Activated CD4-positive, alpha-beta T cell treated with anti-CD3 and anti-CD28 coated beads for 36 hours (primary cell): ENCODE measurements at regions of chr2 and their contacts with region 1.

Region 1: DNA sequence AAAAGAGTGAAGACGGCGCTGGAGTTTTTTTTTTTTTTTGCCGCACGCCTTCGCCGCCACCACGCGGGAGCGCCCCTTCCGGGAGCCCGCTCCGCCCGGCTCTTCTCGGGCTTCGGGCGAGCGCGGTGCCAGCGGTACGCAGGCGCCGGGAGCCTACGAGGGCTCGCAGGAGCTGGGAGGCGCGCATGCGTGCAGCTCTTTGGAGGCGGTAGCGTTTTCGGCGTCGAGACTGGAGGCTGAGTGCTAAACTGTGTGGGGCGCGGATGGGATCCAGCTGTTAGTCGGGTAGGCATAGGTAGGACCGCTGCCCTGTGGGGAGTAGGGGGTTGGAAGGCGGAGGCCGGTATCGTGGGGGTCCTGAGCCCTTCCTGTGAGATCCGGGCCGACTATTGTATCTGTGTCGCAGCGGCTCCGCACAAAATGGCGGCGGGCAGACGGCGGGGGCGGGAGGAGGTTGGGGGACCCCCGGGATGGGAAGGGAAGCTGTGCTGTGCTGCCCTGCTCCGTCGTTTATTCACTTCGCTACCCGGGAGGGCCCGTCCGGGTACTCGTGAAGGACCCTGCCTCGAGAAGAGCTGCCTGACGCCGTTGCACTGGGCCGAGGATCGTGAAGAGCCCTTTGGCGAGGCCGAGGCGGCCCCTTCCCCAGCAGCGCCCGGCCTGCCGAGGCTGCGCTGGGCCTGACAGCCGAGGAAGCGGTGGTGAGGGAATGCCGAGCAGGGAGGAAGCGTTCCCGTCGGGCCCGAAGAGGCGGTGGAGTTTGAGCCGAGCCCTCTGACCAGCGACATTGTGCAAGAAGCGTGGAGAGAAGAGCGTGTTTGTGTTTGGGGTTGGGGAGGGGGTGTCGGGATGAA is at the start of gene ZNF638:
- DNase-seq: peak; percentile 96
- ATAC-seq: peak; percentile 99
- H3K4me3 Mint-ChIP-seq: peak within 1 kb of the TSS; percentile 98
- H3K27ac Mint-ChIP-seq: peak within 1 kb of the TSS; percentile 100
- H3K4me1 Mint-ChIP-seq: peaks cover 31% of the 10 kb centered on the region
- H3K27me3 Mint-ChIP-seq: peaks cover 5% of the 10 kb centered on the region
- total RNA-seq, gene ZNF638: 79.8 to 97.5 TPM

Region 2: GRCh38 chr2:71068218-71069035 is 263.4 kb before region 1 on chr2 and contains the start of gene NAGK:
- CTCF ChIA-PET with region 1: no interaction called
- POLR2A ChIA-PET with region 1: interaction called, 3 read pairs
- intact Hi-C with region 1: loop called in 1 of 2 experiments (anchors 1 kb)
- DNase-seq: peak; percentile 98
- ATAC-seq: peak; percentile 81
- H3K4me3 Mint-ChIP-seq: peak within 1 kb of the TSS; percentile 98
- H3K27ac Mint-ChIP-seq: peak within 1 kb of the TSS; percentile 97
- H3K4me1 Mint-ChIP-seq: peaks cover 53% of the 10 kb centered on the region
- H3K27me3 Mint-ChIP-seq: no peaks in the 10 kb centered on the region
- total RNA-seq, gene NAGK: 39.7 to 40.6 TPM

Region 3: DNA sequence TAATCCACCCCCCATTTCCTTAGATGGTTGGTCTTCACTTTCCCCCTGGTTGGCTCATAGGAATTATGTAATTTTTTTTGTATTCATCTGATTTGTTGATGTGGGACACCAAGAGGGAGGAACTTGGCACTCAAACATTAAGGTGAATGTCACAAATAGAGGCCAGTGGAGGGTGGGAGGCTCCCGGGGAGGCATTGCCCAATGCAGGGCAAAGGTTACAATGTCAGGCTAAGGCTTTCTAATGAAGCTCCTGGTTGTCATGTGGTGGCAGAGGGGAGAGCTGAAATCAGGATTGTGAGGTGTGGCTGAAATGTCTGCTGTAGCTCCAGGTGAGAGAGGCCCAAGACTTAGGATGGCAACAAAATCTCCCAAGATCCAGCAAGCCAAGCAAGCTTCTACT is 158.7 kb before region 1 on chr2:
- CTCF ChIA-PET with region 1: no interaction called
- POLR2A ChIA-PET with region 1: no interaction called
- intact Hi-C with region 1: no loop called
- DNase-seq: no peak
- ATAC-seq: no peak
- H3K4me3 Mint-ChIP-seq: no peak overlapping the region
- H3K27ac Mint-ChIP-seq: no peak overlapping the region
- H3K4me1 Mint-ChIP-seq: peaks cover 8% of the 10 kb centered on the region
- H3K27me3 Mint-ChIP-seq: no peaks in the 10 kb centered on the region

Region 4: DNA sequence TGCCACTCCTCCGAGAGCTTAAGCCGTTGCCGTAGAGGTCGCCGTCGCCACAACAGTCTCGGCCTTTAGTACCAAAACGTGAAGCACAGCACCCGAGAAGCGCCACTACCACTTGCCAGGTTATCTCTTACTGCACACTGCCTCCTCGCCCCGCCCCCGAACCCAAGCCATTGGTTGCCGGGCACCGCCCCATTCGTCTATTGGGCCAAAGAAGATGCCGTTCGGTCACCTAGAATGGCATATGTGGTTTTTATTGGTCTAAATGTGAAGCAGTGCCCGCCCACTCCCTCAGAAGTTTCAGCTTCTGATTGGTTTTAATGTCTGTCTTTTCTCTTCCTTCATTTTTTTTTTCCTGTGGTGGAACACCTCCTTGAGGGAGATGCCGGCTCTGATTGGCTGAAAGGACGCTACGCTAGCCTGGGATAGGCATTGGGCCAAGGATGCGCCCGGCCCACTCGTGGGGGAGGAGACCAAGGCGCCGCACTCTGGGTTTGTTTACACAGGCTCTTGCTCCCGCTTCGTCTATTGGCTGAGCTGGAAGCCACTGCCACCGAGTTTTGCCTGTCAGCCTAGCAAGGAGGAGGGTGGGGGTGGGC is 104.7 kb before region 1 on chr2 and contains the start of gene PAIP2B:
- CTCF ChIA-PET with region 1: interaction called, 3 read pairs
- POLR2A ChIA-PET with region 1: interaction called, 3 read pairs
- intact Hi-C with region 1: loop called in 1 of 2 experiments (anchors 1 kb)
- DNase-seq: peak; percentile 99
- ATAC-seq: peak; percentile 97
- H3K4me3 Mint-ChIP-seq: peak within 1 kb of the TSS; percentile 94
- H3K27ac Mint-ChIP-seq: peak within 1 kb of the TSS; percentile 85
- H3K4me1 Mint-ChIP-seq: peaks cover 15% of the 10 kb centered on the region
- H3K27me3 Mint-ChIP-seq: peaks cover 5% of the 10 kb centered on the region
- total RNA-seq, gene PAIP2B: 2.3 to 3.0 TPM

Region 5: DNA sequence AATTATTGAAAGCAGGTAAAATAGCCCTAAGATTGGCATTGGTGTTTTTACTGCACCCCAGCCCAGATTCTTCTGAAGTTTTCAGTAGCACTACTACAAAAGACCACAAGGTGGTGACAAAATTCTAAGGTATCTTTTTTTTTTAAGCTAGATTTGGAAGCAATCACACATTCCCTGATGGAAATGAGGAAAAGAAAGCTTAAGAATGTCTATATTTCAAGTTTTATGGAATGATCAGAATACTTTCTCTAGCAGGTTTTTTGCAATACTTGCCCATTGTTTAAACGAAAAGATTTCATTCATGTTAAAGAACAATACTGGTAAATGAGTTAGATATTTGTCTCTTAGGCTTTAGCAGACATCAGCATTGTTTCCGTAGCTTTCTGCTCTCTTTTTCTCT is 32.3 kb before region 1 on chr2:
- CTCF ChIA-PET with region 1: interaction called, 10 read pairs
- POLR2A ChIA-PET with region 1: no interaction called
- intact Hi-C with region 1: loop called in 1 of 2 experiments (anchors 1 kb)
- DNase-seq: no peak
- ATAC-seq: no peak
- H3K4me3 Mint-ChIP-seq: no peak overlapping the region
- H3K27ac Mint-ChIP-seq: no peak overlapping the region
- H3K4me1 Mint-ChIP-seq: no peaks in the 10 kb centered on the region
- H3K27me3 Mint-ChIP-seq: no peaks in the 10 kb centered on the region

Region 6: GRCh38 chr2:71353248-71353647 is 21.4 kb after region 1 on chr2:
- CTCF ChIA-PET with region 1: interaction called, 7 read pairs
- POLR2A ChIA-PET with region 1: interaction called, 4 read pairs
- intact Hi-C with region 1: loop called (anchors 2 kb)
- DNase-seq: peak; percentile 10
- ATAC-seq: peak; percentile 98
- H3K4me3 Mint-ChIP-seq: no peak overlapping the region
- H3K27ac Mint-ChIP-seq: peak overlapping the region; percentile 67
- H3K4me1 Mint-ChIP-seq: peaks cover 59% of the 10 kb centered on the region
- H3K27me3 Mint-ChIP-seq: no peaks in the 10 kb centered on the region

Region 7: DNA sequence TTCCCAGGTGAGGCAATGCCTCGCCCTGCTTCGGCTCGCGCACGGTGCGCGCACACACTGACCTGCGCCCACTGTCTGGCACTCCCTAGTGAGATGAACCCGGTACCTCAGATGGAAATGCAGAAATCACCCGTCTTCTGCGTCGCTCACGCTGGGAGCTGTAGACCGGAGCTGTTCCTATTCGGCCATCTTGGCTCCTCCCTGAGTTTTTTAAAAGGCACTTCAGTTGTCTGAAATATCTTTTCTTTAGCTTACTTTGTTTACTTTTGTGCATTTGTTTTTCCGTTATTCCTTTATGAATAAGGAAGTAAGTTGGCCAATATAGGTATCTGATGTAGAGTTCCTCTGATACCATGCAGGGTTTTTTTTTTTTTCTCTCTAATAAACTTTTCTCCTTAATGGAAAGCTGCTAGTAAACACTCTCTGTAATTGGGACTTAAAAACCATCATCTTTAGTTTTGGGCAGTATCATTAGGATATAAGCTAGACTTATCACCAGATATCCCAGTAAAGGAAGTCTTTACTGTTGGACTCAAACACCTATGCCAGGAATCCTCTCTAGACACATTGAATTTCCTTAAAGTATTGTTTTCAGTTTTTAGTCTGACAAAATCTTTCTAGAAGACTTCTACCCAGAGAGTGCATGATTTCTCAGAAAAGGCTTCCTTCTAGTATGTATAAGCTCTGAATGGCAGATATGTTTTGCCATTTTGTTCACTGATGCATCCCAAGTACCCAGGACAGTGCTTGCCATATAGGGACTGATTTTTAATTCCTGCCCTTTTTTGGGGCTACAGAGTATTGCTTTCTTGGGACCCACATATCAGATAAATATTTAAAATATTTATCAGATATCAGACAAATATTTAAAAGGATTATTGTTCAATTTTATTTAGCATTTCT is 85.7 kb after region 1 on chr2:
- CTCF ChIA-PET with region 1: interaction called, 3 read pairs
- POLR2A ChIA-PET with region 1: no interaction called
- intact Hi-C with region 1: loop called (anchors 2 to 5 kb)
- DNase-seq: peak; percentile 8
- ATAC-seq: peak; percentile 36
- H3K4me3 Mint-ChIP-seq: peak overlapping the region; percentile 73
- H3K27ac Mint-ChIP-seq: peak overlapping the region; percentile 81
- H3K4me1 Mint-ChIP-seq: peaks cover 6% of the 10 kb centered on the region
- H3K27me3 Mint-ChIP-seq: no peaks in the 10 kb centered on the region